Posterior vena cava (tissue), 2 donors: ENCODE measurements at regions of chr4 and their contacts with region 1.

Region 1: GRCh38 chr4:136465691-136466090 is 1066.6 kb downstream of the PCDH18 start:
- DNase-seq: no peak

Region 2: GRCh38 chr4:136485006-136485405 is 19.3 kb after region 1 on chr4:
- intact Hi-C with region 1: loop called in 1 of 2 experiments (anchors 1 kb)
- DNase-seq: no peak